CD8-positive, alpha-beta T cell (primary cell): ENCODE measurements at regions of chr1 and their contacts with region 1.

Region 1: GRCh38 chr1:32400876-32401631 is 6.8 kb upstream of the BSDC1 start:
- DNase-seq: peak in 8 of 9 experiments; percentile 25 to 66 (median 48)
- ATAC-seq: peak; percentile 80
- H3K4me3 ChIP-seq: no peak overlapping the region
- H3K4me3 Mint-ChIP-seq: no peak overlapping the region
- H3K27ac ChIP-seq: no peak overlapping the region
- H3K27ac Mint-ChIP-seq: no peak overlapping the region
- H3K4me1 ChIP-seq: peaks cover 4% of the 10 kb centered on the region
- H3K4me1 Mint-ChIP-seq: no peaks in the 10 kb centered on the region
- H3K27me3 ChIP-seq: no peaks in the 10 kb centered on the region
- H3K27me3 Mint-ChIP-seq: no peaks in the 10 kb centered on the region
- CTCF ChIP-seq: peak; percentile 66

Region 2: GRCh38 chr1:31923901-31924535 is 477.0 kb before region 1 on chr1:
- CTCF ChIA-PET with region 1: no interaction called
- POLR2A ChIA-PET with region 1: no interaction called
- intact Hi-C with region 1: no loop called
- DNase-seq: peak in 2 of 9 experiments; percentile 39 to 70
- ATAC-seq: peak; percentile 50
- H3K4me3 ChIP-seq: no peak overlapping the region
- H3K4me3 Mint-ChIP-seq: peak overlapping the region; percentile 69
- H3K27ac ChIP-seq: peak overlapping the region in 1 of 2 experiments; percentile 85
- H3K27ac Mint-ChIP-seq: peak overlapping the region; percentile 92
- H3K4me1 ChIP-seq: peaks cover 74% of the 10 kb centered on the region
- H3K4me1 Mint-ChIP-seq: peaks cover 81% of the 10 kb centered on the region
- H3K27me3 ChIP-seq: no peaks in the 10 kb centered on the region
- H3K27me3 Mint-ChIP-seq: no peaks in the 10 kb centered on the region
- CTCF ChIP-seq: no peak

Region 3: GRCh38 chr1:32386676-32387392 is 14.2 kb before region 1 on chr1:
- CTCF ChIA-PET with region 1: interaction called, 22 read pairs
- POLR2A ChIA-PET with region 1: no interaction called
- intact Hi-C with region 1: no loop called
- DNase-seq: no peak
- ATAC-seq: no peak
- H3K4me3 ChIP-seq: no peak overlapping the region
- H3K4me3 Mint-ChIP-seq: no peak overlapping the region
- H3K27ac ChIP-seq: no peak overlapping the region
- H3K27ac Mint-ChIP-seq: no peak overlapping the region
- H3K4me1 ChIP-seq: peaks cover 14% of the 10 kb centered on the region
- H3K4me1 Mint-ChIP-seq: peaks cover 12% of the 10 kb centered on the region
- H3K27me3 ChIP-seq: no peaks in the 10 kb centered on the region
- H3K27me3 Mint-ChIP-seq: no peaks in the 10 kb centered on the region
- CTCF ChIP-seq: no peak

Region 4: GRCh38 chr1:32413507-32414185 is 12.6 kb after region 1 on chr1:
- CTCF ChIA-PET with region 1: interaction called, 50 read pairs
- POLR2A ChIA-PET with region 1: no interaction called
- intact Hi-C with region 1: loop called (anchors 1 kb)
- DNase-seq: peak; percentile 32 to 88 (median 75)
- ATAC-seq: peak; percentile 80
- H3K4me3 ChIP-seq: no peak overlapping the region
- H3K4me3 Mint-ChIP-seq: no peak overlapping the region
- H3K27ac ChIP-seq: no peak overlapping the region
- H3K27ac Mint-ChIP-seq: no peak overlapping the region
- H3K4me1 ChIP-seq: no peaks in the 10 kb centered on the region
- H3K4me1 Mint-ChIP-seq: peaks cover 3% of the 10 kb centered on the region
- H3K27me3 ChIP-seq: no peaks in the 10 kb centered on the region
- H3K27me3 Mint-ChIP-seq: peaks cover 10% of the 10 kb centered on the region
- CTCF ChIP-seq: peak; percentile 89

Region 5: GRCh38 chr1:32972814-32973428 is 571.9 kb after region 1 on chr1:
- CTCF ChIA-PET with region 1: no interaction called
- POLR2A ChIA-PET with region 1: no interaction called
- intact Hi-C with region 1: no loop called
- DNase-seq: no peak
- ATAC-seq: no peak
- H3K4me3 ChIP-seq: peak overlapping the region; percentile 8 to 33
- H3K4me3 Mint-ChIP-seq: peak overlapping the region; percentile 63
- H3K27ac ChIP-seq: no peak overlapping the region
- H3K27ac Mint-ChIP-seq: no peak overlapping the region
- H3K4me1 ChIP-seq: peaks cover 8% of the 10 kb centered on the region
- H3K4me1 Mint-ChIP-seq: peaks cover 6% of the 10 kb centered on the region
- H3K27me3 ChIP-seq: peaks cover 12 to 13% of the 10 kb centered on the region in 2 experiments
- H3K27me3 Mint-ChIP-seq: peaks cover 23% of the 10 kb centered on the region
- CTCF ChIP-seq: no peak

Region 6: DNA sequence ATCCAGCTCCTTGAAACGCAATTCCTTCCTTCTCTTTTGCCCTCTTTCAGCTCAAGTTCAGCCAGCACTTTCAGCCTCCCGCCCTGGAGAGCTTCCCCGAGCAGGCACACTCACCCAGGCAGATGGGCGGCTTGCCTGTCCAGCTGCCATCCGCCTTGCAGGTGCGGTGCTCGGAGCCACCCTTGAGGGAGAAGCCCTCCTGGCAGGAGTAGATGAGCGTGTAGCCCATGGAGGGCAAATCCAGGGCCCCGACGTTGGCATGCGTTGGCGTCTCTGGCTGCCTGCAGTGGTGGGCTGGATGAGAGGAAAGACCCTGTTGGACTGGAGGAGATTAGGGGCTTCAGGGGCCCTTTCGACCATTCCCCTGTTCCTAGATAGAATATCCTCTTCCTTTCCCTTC is 1131.9 kb after region 1 on chr1:
- CTCF ChIA-PET with region 1: no interaction called
- POLR2A ChIA-PET with region 1: no interaction called
- intact Hi-C with region 1: no loop called
- DNase-seq: no peak
- ATAC-seq: no peak
- H3K4me3 ChIP-seq: no peak overlapping the region
- H3K4me3 Mint-ChIP-seq: no peak overlapping the region
- H3K27ac ChIP-seq: no peak overlapping the region
- H3K27ac Mint-ChIP-seq: no peak overlapping the region
- H3K4me1 ChIP-seq: no peaks in the 10 kb centered on the region
- H3K4me1 Mint-ChIP-seq: no peaks in the 10 kb centered on the region
- H3K27me3 ChIP-seq: no peaks in the 10 kb centered on the region
- H3K27me3 Mint-ChIP-seq: peaks cover 19% of the 10 kb centered on the region
- CTCF ChIP-seq: no peak